ENCODE measurements at regions of chr12 and their contacts with region 1.

Region 1: DNA sequence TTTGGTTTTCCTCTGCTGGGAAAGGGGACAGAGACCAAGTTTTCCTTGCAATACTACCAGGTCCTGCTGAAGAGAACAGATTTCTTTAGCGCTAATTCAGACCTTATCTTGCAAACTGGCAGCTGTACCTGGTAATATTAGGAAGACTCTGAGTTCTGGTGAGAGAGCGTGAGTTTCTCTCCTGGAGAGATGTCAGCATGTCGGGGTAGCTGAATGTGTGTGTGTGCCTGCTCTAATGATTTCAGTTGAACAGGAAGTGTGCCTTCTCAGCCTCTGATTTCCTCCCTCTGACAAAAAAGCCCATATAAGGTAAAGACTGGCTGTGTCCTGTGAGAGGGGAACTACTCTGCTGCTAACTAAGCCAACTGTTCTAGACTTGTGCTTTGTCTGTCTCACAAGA is 10.3 kb upstream of the ERP27 start:
- DNase-seq: peak; percentile 66
- H3K4me3 Mint-ChIP-seq: peak overlapping the region; percentile 76
- H3K27ac Mint-ChIP-seq: peak overlapping the region; percentile 96
- H3K4me1 Mint-ChIP-seq: peaks cover 88% of the 10 kb centered on the region
- H3K27me3 Mint-ChIP-seq: no peaks in the 10 kb centered on the region

Region 2: DNA sequence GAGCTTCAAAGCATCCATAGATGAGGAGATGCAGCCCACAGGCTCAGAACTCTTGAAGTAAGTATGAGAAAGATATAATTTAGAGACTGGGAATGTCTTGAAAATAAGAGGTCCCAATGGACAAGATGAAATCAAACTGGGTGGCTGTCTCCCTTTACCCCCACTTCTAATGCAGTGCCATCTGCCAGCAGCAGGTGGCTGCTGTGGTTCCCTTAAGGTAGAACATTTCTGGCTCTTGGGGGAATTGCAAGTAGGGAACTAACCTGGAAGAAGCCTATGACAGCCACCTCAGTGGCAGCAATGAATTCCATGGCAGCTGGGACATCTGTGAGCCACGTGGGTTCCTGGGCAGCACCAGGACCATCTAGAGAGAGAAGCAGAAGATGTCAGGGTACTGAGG is 11.0 kb before region 1 on chr12:
- CTCF ChIA-PET with region 1: interaction called, 7 read pairs
- POLR2A ChIA-PET with region 1: interaction called, 13 read pairs
- DNase-seq: no peak
- H3K4me3 Mint-ChIP-seq: no peak overlapping the region
- H3K27ac Mint-ChIP-seq: peak overlapping the region; percentile 21
- H3K4me1 Mint-ChIP-seq: peaks cover 20% of the 10 kb centered on the region
- H3K27me3 Mint-ChIP-seq: no peaks in the 10 kb centered on the region

Region 3: DNA sequence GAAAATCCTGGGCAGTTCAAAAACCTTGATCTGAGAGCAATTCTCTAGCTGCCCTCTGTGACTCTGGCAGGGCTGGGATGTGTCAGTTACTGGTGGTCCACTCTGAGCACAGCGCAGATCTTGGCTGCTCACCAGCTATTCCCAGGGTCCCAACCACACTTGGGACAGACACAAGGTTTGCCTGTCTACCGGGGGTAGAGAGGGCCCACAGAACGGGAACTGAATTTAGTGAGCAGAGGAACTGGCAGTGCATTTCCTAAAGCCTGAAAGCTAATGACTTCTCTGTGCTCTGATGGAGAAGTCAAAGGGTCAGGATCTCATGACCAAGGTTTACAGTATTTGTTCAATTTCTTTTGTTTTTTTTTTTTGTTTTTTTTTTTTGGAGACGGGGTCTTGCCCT is 26.8 kb after region 1 on chr12:
- CTCF ChIA-PET with region 1: no interaction called
- POLR2A ChIA-PET with region 1: no interaction called
- DNase-seq: no peak
- H3K4me3 Mint-ChIP-seq: no peak overlapping the region
- H3K27ac Mint-ChIP-seq: no peak overlapping the region
- H3K4me1 Mint-ChIP-seq: peaks cover 34% of the 10 kb centered on the region
- H3K27me3 Mint-ChIP-seq: peaks cover 2% of the 10 kb centered on the region